Activated CD4-positive, alpha-beta memory T cell treated with anti-CD3 and anti-CD28 coated beads for 36 hours (primary cell): ENCODE measurements at regions of chr12 and their contacts with region 1.

Region 1: GRCh38 chr12:53251477-53252348 is 16.4 kb upstream of the ESPL1 start:
- DNase-seq: peak; percentile 79
- H3K4me3 Mint-ChIP-seq: peak overlapping the region; percentile 97
- H3K27ac Mint-ChIP-seq: peak overlapping the region; percentile 89
- H3K4me1 Mint-ChIP-seq: peaks cover 40% of the 10 kb centered on the region
- H3K27me3 Mint-ChIP-seq: no peaks in the 10 kb centered on the region

Region 2: DNA sequence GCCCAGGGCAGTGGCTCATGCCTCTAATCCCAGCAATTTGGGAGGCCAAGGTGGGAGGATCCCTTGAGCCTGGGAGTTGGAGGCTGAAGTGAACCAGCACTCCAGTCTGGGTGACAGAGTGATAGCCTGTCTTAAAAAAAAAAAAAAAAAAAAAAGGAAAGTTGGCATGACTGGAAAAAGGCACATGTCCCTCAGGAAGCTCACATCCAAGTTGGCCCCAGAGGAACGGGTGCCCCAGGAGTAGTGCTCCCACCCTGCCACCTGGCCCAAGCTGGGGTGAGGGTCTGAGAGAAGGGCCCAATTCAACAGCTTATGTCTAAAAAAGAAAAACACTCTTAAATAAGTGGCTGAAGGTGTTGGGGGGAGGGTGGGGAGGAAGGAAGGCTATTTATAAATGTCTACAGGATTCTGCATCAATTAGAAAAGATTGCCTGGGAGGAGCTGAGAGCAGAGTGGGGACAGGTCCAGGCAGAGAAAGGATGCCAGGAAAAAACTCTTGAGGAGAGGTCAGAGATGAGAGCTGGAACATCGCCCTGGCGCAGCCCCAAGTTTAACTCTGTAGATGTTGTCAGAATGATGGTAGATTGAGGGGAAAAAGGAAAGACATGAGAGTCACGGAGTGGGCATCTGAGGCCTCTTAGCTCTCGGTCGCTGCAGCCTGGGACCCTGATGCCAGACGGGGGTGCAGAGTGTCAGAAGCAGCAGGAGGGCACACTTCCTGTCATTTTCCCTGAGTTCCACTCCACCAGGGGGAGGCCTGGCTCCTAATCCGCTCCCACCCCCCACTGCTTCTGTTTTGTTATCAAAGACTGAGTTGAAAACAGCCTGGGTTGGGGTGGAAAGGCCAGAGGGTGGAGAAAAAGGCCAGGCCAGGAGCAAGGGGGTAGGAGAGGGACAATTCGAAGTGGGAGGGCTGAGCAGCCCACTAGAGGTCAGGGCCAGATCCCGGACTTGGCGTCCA is 179.8 kb before region 1 on chr12:
- CTCF ChIA-PET with region 1: no interaction called
- POLR2A ChIA-PET with region 1: no interaction called
- intact Hi-C with region 1: no loop called
- DNase-seq: no peak
- H3K4me3 Mint-ChIP-seq: no peak overlapping the region
- H3K27ac Mint-ChIP-seq: no peak overlapping the region
- H3K4me1 Mint-ChIP-seq: peaks cover 5% of the 10 kb centered on the region
- H3K27me3 Mint-ChIP-seq: no peaks in the 10 kb centered on the region

Region 3: DNA sequence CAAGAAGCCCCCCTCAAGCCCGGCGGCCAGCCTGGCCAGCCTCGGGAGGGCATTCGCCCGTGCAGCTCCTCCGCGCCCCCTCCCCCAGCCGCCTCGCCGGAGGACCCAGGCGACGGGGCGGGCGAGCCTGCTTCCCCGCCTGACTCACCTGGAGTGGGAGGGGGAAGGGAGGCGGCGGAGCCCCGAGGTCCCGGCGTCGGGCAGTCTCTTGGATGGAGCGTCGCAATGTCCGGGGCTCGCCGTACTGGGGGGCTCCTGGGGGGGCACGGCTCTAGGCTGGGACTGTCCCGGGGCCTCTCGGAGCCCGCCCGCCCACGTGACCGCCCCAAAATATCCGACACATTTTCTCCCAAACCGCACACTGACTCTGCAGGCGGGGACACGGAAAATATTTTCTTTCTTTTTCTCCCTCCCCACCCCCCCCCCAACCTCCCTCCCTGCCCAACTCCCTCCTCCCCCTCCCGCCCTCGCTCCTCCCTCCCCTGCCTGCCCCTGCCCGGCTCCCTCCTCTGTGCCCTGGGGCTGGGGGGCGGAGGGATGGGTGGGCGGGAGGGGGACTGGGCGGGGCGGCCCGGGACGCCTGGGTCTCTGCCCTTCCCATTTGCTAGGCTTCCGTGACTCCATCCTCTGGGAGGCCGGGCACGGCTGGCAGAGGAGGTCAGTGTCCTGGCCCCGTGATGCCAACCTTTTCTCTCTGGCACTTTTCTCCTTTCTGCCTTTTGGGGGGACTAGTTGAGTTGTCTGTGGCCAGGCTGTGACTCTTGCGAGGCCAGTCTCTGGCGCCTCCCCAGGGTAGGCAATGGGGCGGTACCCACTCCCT is 19.7 kb before region 1 on chr12 and contains the start of gene RARG:
- CTCF ChIA-PET with region 1: interaction called, 24 read pairs
- POLR2A ChIA-PET with region 1: no interaction called
- intact Hi-C with region 1: loop called (anchors 2 kb)
- DNase-seq: peak; percentile 81
- H3K4me3 Mint-ChIP-seq: peak within 1 kb of the TSS; percentile 86
- H3K27ac Mint-ChIP-seq: peak within 1 kb of the TSS; percentile 91
- H3K4me1 Mint-ChIP-seq: peaks cover 74% of the 10 kb centered on the region
- H3K27me3 Mint-ChIP-seq: no peaks in the 10 kb centered on the region
- total RNA-seq, gene RARG: 21.8 to 25.2 TPM

Region 4: GRCh38 chr12:53295070-53295890 is 43.6 kb after region 1 on chr12 and contains the start of gene PFDN5:
- CTCF ChIA-PET with region 1: interaction called, 3 read pairs
- POLR2A ChIA-PET with region 1: interaction called, 3 read pairs
- intact Hi-C with region 1: loop called (anchors 5 kb)
- DNase-seq: peak; percentile 92
- H3K4me3 Mint-ChIP-seq: peak within 1 kb of the TSS; percentile 99
- H3K27ac Mint-ChIP-seq: peak within 1 kb of the TSS; percentile 94
- H3K4me1 Mint-ChIP-seq: peaks cover 53% of the 10 kb centered on the region
- H3K27me3 Mint-ChIP-seq: no peaks in the 10 kb centered on the region
- total RNA-seq, gene PFDN5: 354 to 359 TPM

Region 5: DNA sequence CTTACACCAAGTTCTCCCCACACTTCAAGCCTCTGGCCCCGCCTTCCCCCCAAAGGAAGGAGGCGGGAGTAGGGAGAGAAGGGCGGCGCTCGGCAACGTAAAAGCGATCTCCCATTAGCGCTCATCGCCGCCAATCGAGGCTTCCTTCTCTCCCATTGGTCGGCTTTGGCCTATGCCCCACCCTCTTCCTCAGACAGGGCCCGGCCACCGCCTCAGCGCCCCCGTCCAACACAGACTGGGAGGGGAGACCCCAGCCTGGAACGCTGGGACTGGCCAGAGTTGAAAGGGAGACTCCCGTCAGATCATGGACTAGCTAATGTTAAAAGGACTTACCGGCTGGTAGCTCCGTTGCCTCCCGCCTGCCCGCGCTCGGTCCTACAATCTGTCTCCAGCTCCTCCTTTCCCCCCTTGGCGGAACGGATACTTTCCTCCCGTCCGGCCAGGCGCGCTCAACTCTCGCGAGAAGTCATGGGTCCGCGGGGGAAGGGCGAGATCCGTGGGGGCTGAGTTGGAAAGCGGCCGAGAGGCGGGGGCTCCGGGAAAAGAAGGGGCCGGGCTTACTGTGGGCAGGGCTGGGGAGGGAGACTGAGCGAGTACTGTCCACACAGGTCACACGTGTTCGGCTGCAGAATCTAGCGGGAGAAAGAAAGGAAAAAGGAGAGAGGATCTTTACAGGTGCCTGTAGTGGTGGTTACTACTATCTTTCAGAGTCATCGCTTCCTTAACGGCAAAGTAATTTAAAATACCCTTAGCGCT is 374.4 kb after region 1 on chr12 and contains the start of gene ATF7:
- CTCF ChIA-PET with region 1: no interaction called
- POLR2A ChIA-PET with region 1: no interaction called
- intact Hi-C with region 1: no loop called
- DNase-seq: peak; percentile 99
- H3K4me3 Mint-ChIP-seq: peak within 1 kb of the TSS; percentile 97
- H3K27ac Mint-ChIP-seq: peak within 1 kb of the TSS; percentile 94
- H3K4me1 Mint-ChIP-seq: peaks cover 43% of the 10 kb centered on the region
- H3K27me3 Mint-ChIP-seq: no peaks in the 10 kb centered on the region
- total RNA-seq, gene ATF7: 19.3 to 20.7 TPM